ENCODE measurements at regions of chr15 and their contacts with region 1.

Region 1: DNA sequence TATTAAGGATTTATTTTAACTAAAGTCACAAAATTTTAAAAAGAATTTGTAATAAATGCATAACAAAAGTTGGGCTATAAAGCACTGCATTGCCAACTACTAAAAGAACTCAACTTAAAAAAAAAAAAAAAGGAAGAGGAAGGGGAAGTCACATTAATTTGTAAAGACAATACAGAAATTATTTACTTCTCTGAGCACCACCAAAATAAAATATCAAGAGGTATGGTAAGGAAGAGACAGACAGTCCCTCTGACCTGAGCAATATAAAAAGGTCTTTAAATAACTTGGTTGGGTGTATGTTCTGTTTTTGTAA is 83.5 kb downstream of the UACA start:
- DNase-seq: no peak
- ATAC-seq: no peak
- H3K4me3 Mint-ChIP-seq: no peak overlapping the region
- H3K27ac Mint-ChIP-seq: no peak overlapping the region
- H3K4me1 Mint-ChIP-seq: no peaks in the 10 kb centered on the region
- H3K27me3 Mint-ChIP-seq: peaks cover 9% of the 10 kb centered on the region
- CTCF ChIP-seq: no peak

Region 2: DNA sequence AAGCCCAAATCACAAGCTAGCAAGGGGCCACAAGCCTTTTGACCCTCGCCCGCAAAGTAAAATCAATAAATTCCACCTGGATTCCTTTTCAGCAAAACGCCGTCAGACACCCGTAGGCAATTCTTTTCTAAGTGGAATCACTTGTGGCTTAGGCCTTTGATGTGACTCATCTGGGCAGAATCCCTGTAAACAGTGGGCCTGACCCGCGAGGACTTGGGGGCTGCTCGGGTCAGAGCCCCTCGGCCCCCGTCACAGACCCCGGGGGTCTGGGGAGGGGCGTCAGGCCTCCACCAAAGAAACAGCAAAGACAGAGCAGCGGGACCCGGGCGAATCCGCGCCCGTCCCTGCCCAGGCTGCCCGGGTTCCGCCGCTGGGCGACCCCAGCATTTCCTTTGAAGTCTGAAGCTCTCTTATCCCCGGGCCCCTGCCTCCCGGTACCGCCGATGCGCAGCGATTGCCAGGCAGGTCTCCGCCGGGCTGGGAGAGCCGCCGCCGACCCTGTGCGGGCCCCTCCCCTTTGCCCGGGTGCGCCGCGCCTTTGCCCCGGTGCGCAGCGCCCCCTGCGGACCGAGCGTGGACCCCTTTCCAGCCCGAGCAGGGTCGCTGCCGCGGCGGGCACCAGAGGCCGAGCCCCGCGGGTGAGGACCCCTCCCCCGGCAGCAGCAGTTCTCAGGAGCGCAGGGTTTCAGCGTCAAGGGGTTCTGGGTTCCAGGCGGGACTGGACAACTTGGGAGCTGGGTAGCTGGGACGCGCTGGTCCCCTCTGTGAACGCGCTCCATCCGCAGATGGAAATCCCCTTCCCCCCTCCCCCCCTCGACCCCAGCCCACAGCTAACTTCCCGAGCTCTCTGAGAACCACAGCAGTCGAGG is 94.8 kb before region 1 on chr15:
- CTCF ChIA-PET with region 1: no interaction called
- POLR2A ChIA-PET with region 1: no interaction called
- intact Hi-C with region 1: no loop called
- DNase-seq: peak; percentile 28
- ATAC-seq: peak; percentile 40
- H3K4me3 Mint-ChIP-seq: no peak overlapping the region
- H3K27ac Mint-ChIP-seq: no peak overlapping the region
- H3K4me1 Mint-ChIP-seq: peaks cover 4% of the 10 kb centered on the region
- H3K27me3 Mint-ChIP-seq: peaks cover 43% of the 10 kb centered on the region
- CTCF ChIP-seq: no peak

Region 3: DNA sequence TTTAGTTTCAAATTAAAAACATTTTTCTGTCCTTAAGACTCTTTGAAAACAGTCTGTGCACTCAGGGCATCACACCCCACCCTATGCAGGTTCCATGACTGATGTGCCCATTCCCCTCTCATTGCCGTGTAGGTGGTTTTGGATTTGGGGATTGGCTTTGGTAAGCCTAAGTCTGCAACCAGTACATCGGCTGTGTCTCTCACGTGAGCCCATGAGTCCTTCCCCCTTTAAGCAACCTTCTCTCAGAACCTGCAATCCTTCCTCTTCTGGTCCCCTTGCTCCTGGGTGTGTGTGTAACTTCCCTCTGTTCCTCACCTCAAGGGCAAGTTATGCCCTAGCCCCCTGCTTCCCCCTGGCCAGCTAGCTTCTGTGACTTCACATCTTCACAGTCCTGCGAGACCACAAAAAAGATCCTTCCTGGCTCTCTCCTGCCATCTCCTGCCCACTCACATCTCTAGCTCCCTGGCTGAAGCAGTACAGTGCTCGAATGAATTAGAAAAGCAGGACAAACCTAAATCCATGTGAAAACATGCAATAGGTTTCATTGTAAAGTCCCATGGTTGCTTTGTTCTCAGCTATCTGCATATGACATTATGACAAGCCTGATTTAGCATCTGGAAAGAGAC is 43.2 kb before region 1 on chr15:
- CTCF ChIA-PET with region 1: no interaction called
- POLR2A ChIA-PET with region 1: no interaction called
- intact Hi-C with region 1: no loop called
- DNase-seq: no peak
- ATAC-seq: no peak
- H3K4me3 Mint-ChIP-seq: no peak overlapping the region
- H3K27ac Mint-ChIP-seq: no peak overlapping the region
- H3K4me1 Mint-ChIP-seq: peaks cover 3% of the 10 kb centered on the region
- H3K27me3 Mint-ChIP-seq: peaks cover 29% of the 10 kb centered on the region
- CTCF ChIP-seq: no peak

Region 4: DNA sequence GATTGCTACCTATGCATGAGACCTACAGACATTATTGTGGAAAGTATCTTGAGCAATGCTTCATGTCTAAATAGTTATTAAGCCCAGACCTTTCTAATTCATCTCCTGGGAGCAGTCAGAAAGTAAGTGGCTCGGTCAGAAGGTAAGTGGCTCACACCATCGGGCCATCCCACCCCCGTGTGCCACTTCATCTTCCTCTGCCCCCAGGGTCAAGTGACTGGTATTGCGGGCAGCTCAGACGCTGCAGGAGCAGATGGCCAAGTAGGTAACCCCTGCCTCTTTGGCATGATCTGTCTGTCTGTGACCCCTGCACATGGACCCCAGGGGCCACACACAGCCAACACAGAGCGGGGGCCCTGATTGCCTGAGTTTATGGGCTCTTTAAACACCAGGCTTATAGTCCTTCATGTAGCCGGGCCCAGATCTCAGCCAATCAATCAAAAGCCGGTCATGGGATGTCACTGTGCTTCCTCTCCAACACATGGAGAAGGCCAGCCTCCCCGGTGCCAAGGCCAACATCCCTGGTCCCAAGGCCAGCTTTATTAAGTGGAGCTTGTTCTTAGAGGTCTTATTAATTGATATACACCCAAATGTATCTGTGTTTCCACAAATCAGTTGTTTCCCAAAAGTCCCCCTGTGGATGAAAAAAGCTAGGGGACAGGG is 131.2 kb after region 1 on chr15:
- CTCF ChIA-PET with region 1: interaction called, 20 read pairs
- POLR2A ChIA-PET with region 1: no interaction called
- intact Hi-C with region 1: loop called (anchors 1 kb)
- DNase-seq: no peak
- ATAC-seq: no peak
- H3K4me3 Mint-ChIP-seq: no peak overlapping the region
- H3K27ac Mint-ChIP-seq: no peak overlapping the region
- H3K4me1 Mint-ChIP-seq: peaks cover 12% of the 10 kb centered on the region
- H3K27me3 Mint-ChIP-seq: peaks cover 6% of the 10 kb centered on the region
- CTCF ChIP-seq: no peak

Region 5: GRCh38 chr15:70936326-70936725 is 256.5 kb after region 1 on chr15:
- CTCF ChIA-PET with region 1: no interaction called
- POLR2A ChIA-PET with region 1: no interaction called
- intact Hi-C with region 1: no loop called
- DNase-seq: no peak
- ATAC-seq: no peak
- H3K4me3 Mint-ChIP-seq: no peak overlapping the region
- H3K27ac Mint-ChIP-seq: no peak overlapping the region
- H3K4me1 Mint-ChIP-seq: peaks cover 2% of the 10 kb centered on the region
- H3K27me3 Mint-ChIP-seq: peaks cover 5% of the 10 kb centered on the region
- CTCF ChIP-seq: no peak

Measured in activated B cell treated with CpG ODN at 0.5 μM for 24 hours (primary cell).